Dorsolateral prefrontal cortex (tissue), 120 donors: ENCODE measurements at regions of chr18 and their contacts with region 1.

Region 1: GRCh38 chr18:5417342-5417741 is 121.8 kb upstream of the ZBTB14 start:
- DNase-seq: peak; percentile 37 to 87 (median 72)
- H3K4me3 ChIP-seq: peak overlapping the region in 54 of 59 donors; percentile 1 to 68 (median 46)
- H3K27ac ChIP-seq: peak overlapping the region; percentile 1 to 97 (median 89)
- H3K27me3 ChIP-seq: no peaks in the 10 kb centered on the region
- CTCF ChIP-seq: peak in 1 of 56 donors; percentile 13

Region 2: GRCh38 chr18:5066380-5066977 is 350.9 kb before region 1 on chr18:
- intact Hi-C with region 1: no loop called
- DNase-seq: no peak
- H3K4me3 ChIP-seq: no peak overlapping the region
- H3K27ac ChIP-seq: no peak overlapping the region
- H3K27me3 ChIP-seq: no peaks in the 10 kb centered on the region
- CTCF ChIP-seq: peak in 13 of 56 donors; percentile 10 to 41 (median 18)

Region 3: DNA sequence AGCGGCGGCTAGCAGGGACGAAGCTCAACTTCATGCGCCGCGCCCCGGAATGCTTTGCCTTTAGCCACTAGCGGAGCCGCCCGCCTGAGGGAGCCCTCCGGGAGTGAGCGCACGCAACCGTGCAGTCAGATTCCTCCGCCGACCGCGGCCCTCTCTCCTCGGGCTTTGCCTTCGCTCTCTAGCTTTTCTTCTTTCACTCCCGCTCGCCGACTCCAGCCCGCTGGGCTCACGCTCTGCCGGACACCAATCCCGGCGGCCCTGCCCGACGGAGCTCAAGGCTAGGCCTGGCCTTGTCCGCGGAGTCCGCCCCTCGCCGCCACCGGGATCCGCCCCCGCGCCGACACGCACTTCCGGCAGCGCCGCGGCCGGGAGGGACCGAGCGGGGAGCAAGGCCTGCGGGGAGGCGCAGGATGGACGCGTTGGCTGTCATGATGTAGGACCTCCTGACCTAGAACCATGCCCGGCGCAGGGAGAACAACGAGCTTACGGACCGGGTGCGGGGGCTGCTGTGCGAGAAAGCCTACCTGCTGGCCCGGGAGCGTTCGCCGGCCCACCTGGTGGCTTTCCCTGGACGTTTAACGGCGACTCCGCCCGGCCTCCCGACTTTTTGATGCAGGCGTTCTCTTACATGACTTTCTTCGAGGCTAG is 179.5 kb before region 1 on chr18:
- intact Hi-C with region 1: loop called (anchors 5 kb)
- DNase-seq: peak; percentile 80 to 95 (median 89)
- H3K4me3 ChIP-seq: peak overlapping the region; percentile 63 to 98 (median 88)
- H3K27ac ChIP-seq: peak overlapping the region; percentile 92 to 100 (median 99)
- H3K27me3 ChIP-seq: no peaks in the 10 kb centered on the region
- CTCF ChIP-seq: peak in 48 of 56 donors; percentile 3 to 73 (median 44)